HepG2 (cell line): ENCODE measurements at regions of chr1 and their contacts with region 1.

Region 1: DNA sequence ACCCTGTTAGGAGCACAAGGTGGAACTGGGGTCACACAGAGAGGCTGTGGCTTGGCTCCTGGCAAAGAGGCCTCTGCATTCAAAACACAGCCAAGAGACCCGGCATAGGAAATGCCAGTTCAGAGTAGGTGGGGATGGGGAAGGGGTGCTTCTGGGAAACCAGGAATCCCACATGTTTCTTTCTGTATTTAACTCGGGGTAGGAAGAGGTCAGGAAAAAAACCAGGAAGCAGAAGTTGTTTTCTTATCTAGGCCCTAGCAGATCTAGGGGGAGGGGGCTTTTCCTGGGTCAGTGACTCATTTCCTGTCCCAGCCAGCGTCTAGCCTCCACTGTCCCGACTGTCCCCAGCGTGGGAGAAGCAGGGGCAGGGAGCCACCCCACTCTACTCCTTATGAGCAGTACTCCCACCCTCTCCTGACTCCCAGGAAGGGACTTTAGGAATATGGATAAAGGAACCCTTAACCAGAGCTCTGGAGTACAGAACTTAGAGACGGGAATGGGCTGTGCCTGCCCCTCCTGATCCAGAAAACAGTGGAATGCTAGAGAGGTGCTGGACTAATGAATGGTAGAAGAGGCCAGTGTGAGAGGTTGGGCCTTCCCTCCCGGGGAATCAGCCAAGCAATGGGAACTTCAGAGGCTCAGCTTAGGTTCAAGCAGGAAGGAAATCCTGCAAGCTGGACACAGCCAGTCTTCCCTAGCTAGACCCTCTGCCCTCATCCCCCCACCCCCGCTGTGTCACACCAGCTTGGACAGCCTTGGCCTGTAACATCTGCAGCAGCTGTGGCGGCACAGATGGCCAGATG is 5.7 kb downstream of the FHL3 start:
- DNase-seq: peak; percentile 75
- ATAC-seq: peak; percentile 61
- H3K4me3 ChIP-seq: peak overlapping the region; percentile 9 to 58 (median 27); a peak in 5 of 6 replicates
- H3K27ac ChIP-seq: peak overlapping the region; percentile 72
- H3K4me1 ChIP-seq: peaks cover 55% of the 10 kb centered on the region
- H3K27me3 ChIP-seq: no peaks in the 10 kb centered on the region; a peak in 1 of 5 replicates
- CTCF ChIP-seq: no peak
- EP300 ChIP-seq: peak in 1 of 2 experiments; percentile 51; a peak in 1 of 4 replicates
- POLR2A ChIP-seq: peak in 1 of 2 experiments; percentile 38; a peak in 1 of 4 replicates
- RAD21 ChIP-seq: no peak

Region 2: GRCh38 chr1:38012363-38013226 is 13.0 kb after region 1 on chr1 and contains the start of gene UTP11:
- CTCF ChIA-PET with region 1: no interaction called
- POLR2A ChIA-PET with region 1: interaction called, 48 read pairs
- in situ Hi-C with region 1: no loop called
- intact Hi-C with region 1: no loop called
- DNase-seq: peak; percentile 98
- ATAC-seq: peak; percentile 94
- H3K4me3 ChIP-seq: peak within 1 kb of the TSS; percentile 74 to 95 (median 85)
- H3K27ac ChIP-seq: peak within 1 kb of the TSS; percentile 88
- H3K4me1 ChIP-seq: peaks cover 54% of the 10 kb centered on the region
- H3K27me3 ChIP-seq: no peaks in the 10 kb centered on the region; a peak in 1 of 5 replicates
- CTCF ChIP-seq: no peak
- EP300 ChIP-seq: no peak
- POLR2A ChIP-seq: peak; percentile 80 to 95
- RAD21 ChIP-seq: no peak; the same call in 1 of the 2 replicates
- total RNA-seq, gene UTP11: 44.8 and 71.4 TPM in 2 replicates